ENCODE measurements at regions of chrX and their contacts with region 1.

Region 1: DNA sequence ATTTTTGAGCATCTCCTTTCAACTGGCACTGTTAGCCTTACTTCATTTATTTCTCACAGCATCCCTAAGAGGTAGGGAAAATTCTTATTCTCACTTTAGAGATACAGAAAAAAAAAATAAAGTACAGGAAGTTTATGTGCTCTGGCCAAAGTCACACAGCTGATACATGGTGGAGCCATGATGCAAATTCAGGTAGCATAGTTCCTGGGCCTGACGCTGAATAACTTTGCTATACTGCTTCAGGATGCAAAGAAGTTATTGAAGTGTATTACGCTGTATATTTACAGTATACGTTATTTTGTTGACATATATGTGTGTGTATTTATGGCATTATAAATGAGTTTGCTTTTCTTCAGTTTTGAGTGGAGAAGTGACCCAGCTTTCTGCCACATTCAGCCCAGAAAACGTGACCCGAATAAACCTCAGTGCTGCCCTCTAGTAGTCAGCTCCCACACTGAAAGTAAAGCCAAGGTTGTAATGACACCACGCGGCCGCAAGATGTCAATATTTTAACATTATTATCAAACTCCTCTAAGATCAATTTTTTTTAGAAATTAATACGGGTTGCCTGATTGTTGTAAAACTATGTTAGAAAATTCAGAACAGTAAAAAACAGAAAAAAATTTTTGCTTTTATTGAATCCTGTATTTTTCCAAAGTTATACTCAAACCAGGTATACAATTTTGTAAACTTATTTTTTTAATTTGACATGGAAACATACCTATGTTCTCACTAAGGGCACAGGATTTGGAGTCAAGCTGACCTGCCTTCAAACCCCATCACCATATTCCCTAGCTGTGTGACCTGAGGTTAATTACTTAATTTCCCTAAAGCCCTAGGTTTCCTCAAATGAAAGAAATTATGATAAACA is 3.8 kb upstream of the GUCY2F start:
- DNase-seq: peak; percentile 79 to 80
- H3K4me3 ChIP-seq: no peak overlapping the region
- H3K4me1 ChIP-seq: no peaks in the 10 kb centered on the region
- H3K27me3 ChIP-seq: peaks cover 19% of the 10 kb centered on the region

Region 2: GRCh38 chrX:109294097-109294814 is 191.4 kb before region 1 on chrX:
- in situ Hi-C with region 1: no loop called
- DNase-seq: no peak
- H3K4me3 ChIP-seq: no peak overlapping the region
- H3K4me1 ChIP-seq: no peaks in the 10 kb centered on the region; the same call in 1 of the 2 replicates
- H3K27me3 ChIP-seq: no peaks in the 10 kb centered on the region

Region 3: GRCh38 chrX:109336141-109336540 is 149.6 kb before region 1 on chrX:
- in situ Hi-C with region 1: no loop called
- DNase-seq: no peak
- H3K4me3 ChIP-seq: no peak overlapping the region
- H3K4me1 ChIP-seq: no peaks in the 10 kb centered on the region
- H3K27me3 ChIP-seq: no peaks in the 10 kb centered on the region

Region 4: DNA sequence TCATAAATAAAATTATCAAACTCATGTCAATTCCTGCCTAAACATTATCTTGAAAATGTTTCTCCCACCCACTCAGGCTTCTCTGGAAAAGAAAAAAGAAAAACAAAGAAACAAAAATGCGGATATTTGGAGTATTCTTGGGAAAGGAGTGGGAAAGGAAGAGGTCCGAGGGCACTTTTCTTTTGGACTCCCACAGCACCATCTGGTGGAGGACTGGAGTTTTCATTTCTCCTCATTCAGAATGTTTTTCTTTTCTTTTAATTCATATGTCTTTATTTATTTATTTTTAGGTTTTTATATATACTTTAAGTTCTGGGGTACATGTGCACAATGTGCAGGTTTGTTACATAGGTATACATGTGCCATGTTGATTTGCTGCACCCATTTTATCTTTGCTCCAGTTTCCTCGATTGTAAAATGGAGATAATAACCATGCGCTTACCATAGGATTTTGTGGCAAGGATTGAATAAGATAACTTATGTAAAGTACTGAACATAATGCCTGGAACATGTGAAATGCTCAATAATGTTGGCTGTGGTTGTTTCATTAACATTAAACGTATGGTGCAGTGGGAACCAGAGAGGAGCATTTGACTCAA is 147.3 kb after region 1 on chrX:
- in situ Hi-C with region 1: loop called (anchors 5 kb)
- DNase-seq: peak; percentile 33 to 64
- H3K4me3 ChIP-seq: no peak overlapping the region
- H3K4me1 ChIP-seq: no peaks in the 10 kb centered on the region
- H3K27me3 ChIP-seq: no peaks in the 10 kb centered on the region

Region 5: DNA sequence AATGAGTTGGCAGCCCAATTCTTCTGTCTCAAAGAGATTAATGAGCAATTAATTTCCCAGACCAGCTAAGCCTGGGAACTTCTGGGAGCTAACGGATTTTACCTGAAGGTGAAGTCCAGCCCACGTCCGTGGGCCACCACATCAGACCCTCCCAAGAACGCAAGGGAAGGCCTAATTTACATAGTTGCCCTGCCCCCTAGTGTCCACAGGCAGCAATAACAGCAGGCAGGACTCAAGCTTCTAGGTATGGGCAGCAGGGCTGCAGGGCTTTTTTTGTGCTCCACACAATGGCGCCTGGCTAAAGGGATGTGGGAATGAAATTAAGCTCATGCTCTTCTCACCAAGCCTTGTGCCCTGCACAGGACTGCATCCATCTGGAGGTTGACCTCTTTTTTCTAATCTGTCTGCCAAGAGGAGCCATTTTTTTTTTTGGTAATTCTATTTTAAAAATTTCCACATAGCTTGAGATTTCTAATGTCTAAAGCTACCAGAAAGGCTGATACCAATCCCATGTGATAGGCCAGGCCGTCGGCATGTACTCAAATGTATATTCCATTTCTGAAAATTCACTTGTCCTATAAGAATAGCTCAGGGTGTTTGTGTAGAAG is 405.3 kb after region 1 on chrX:
- in situ Hi-C with region 1: loop called (anchors 25 kb)
- DNase-seq: peak; percentile 68 to 84
- H3K4me3 ChIP-seq: no peak overlapping the region
- H3K4me1 ChIP-seq: peaks cover 6% of the 10 kb centered on the region; the same call in 1 of the 2 replicates
- H3K27me3 ChIP-seq: peaks cover 13% of the 10 kb centered on the region; the same call in 1 of the 2 replicates

Measured in HAP-1 (cell line).